ENCODE measurements at regions of chr9 and their contacts with region 1.

Region 1: GRCh38 chr9:13841746-13842462 is 472.0 kb downstream of the NFIB start:
- DNase-seq: no peak
- H3K4me3 ChIP-seq: no peak overlapping the region
- H3K27ac ChIP-seq: no peak overlapping the region
- H3K4me1 ChIP-seq: no peaks in the 10 kb centered on the region
- H3K27me3 ChIP-seq: no peaks in the 10 kb centered on the region
- CTCF ChIP-seq: no peak
- POLR2A ChIP-seq: no peak

Region 2: DNA sequence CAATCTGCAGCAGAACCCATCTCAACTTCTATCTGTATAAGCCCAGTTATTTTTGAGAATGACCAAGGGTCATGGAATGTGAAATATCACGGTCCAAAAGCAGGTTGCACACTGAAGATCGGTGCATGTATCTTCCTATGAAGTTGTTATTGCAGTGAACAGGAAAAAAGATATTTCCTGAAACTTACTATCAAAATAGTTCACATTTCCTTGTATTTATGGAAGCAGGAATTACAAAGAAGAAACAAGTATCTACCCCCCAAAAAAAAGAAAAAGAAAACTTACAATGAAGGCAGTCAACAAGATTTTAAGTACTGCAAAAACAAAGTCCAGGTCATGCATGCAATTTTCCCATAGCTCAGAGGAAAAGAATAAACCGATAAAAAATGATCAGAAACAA is 632.4 kb before region 1 on chr9:
- intact Hi-C with region 1: loop called (anchors 5 kb)
- DNase-seq: no peak
- H3K4me3 ChIP-seq: no peak overlapping the region
- H3K27ac ChIP-seq: no peak overlapping the region
- H3K4me1 ChIP-seq: no peaks in the 10 kb centered on the region
- H3K27me3 ChIP-seq: no peaks in the 10 kb centered on the region
- CTCF ChIP-seq: no peak
- POLR2A ChIP-seq: no peak

Measured in breast epithelium (tissue), 4 donors.